Cardiac septum (tissue), 1 donor: ENCODE measurements at regions of chr10 and their contacts with region 1.

Region 1: GRCh38 chr10:99659031-99659867 is at the start of gene ENTPD7:
- DNase-seq: peak; percentile 99
- total RNA-seq, gene ENTPD7: 2.5 TPM

Region 2: DNA sequence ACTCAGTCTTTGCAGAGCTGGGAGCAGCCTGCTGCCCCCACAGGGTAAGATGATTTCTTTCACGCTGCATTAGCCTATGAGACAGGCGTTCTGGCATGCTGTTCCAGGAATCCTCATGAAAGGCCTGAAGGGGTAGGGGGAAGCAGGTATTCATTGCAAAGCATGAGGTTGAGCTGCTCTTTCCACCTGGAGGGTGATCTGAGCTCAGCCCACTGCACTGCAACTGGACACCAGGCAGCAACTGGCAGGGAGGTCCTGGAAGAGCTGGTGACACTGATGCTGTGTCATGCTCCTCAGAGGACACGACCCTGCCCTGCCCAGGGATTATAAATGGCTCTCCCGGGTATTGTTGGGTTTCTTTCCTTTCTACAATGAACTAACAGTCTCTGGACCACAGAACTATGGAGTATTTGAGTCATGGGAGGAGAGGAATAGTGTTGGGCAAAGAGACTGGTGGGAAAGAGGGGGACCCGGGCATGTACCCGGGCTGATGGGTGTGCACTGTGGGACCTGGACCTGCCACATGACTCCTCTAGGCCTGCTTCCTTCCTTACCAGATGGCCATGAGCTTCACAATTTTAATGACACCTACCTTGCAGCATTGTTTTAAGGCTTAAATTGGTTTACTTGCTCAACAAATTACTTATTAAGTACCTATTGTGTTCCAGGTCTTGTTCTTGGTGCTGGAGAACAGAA is 63.3 kb before region 1 on chr10:
- intact Hi-C with region 1: no loop called
- DNase-seq: no peak

Region 3: GRCh38 chr10:99620713-99621453 is 38.4 kb before region 1 on chr10:
- intact Hi-C with region 1: loop called (anchors 1 kb)
- DNase-seq: peak; percentile 97

Region 4: DNA sequence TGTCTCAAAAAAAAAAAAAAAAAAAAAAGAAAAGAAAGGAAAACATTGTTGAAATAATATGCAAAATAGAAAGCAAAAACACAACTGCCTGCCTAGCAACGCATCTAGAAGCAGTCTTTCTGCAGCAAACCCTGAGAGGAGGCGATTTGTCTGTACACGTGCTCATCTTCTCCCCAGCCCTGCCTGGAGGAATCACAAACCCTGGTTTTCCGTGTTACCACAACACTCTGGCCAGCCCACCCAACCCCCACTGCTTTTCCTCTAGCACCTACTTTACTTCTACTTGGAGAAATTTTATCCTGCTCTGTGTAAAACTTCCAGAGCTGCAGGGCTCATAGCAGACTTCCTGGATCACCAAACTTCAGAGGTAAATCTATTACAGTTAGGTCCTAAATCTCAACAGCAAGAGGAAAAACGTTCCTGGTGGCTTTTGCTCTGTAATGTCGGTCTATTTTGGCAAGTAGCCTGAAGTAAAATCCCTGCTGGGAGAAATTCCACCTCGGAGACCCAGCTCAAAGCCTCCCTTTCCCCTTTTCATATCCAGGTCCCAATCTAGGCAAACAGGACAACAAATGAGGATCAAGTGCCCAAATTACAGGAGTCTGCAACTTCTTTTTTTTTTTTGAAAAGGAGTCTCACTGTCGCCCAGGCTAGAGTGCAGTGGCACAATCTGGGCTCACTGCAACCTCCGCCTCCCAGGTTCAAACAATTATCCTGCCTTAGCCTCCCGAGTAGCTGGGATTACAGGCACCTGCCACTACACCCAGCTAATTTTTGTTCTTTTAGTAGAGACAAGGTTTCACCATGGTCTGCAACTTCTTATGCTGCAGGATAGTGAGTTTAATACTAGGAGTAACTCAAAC is 258.9 kb after region 1 on chr10:
- intact Hi-C with region 1: no loop called
- DNase-seq: no peak

Region 5: GRCh38 chr10:100025576-100025975 is 366.3 kb after region 1 on chr10:
- intact Hi-C with region 1: no loop called
- DNase-seq: no peak